Heart right ventricle (tissue), 16 donors: ENCODE measurements at regions of chr20 and their contacts with region 1.

Region 1: GRCh38 chr20:38825901-38826625 is 20.6 kb downstream of the PPP1R16B start:
- DNase-seq: no peak
- ATAC-seq: peak in 1 of 8 donors; percentile 15
- H3K4me3 ChIP-seq: no peak overlapping the region
- H3K27ac ChIP-seq: peak overlapping the region in 1 of 10 donors; percentile 39
- H3K4me1 ChIP-seq: peaks cover 6 to 86% (median 45%) of the 10 kb centered on the region in 9 donors
- H3K27me3 ChIP-seq: peaks cover 0 to 16% (median 0%) of the 10 kb centered on the region in 7 donors
- CTCF ChIP-seq: no peak

Region 2: GRCh38 chr20:38883081-38883980 is 57.3 kb after region 1 on chr20:
- intact Hi-C with region 1: loop called in 1 of 10 experiments (anchors 5 kb)
- DNase-seq: peak; percentile 28 to 30
- ATAC-seq: peak; percentile 26 to 61 (median 40)
- H3K4me3 ChIP-seq: no peak overlapping the region
- H3K27ac ChIP-seq: peak overlapping the region in 1 of 10 donors; percentile 21
- H3K4me1 ChIP-seq: peaks cover 0 to 55% (median 15%) of the 10 kb centered on the region in 9 donors
- H3K27me3 ChIP-seq: peaks cover 0 to 29% (median 11%) of the 10 kb centered on the region in 7 donors
- CTCF ChIP-seq: no peak

Region 3: GRCh38 chr20:39214828-39215227 is 388.8 kb after region 1 on chr20:
- intact Hi-C with region 1: no loop called
- DNase-seq: no peak
- ATAC-seq: no peak
- H3K4me3 ChIP-seq: no peak overlapping the region
- H3K27ac ChIP-seq: no peak overlapping the region
- H3K4me1 ChIP-seq: no peaks in the 10 kb centered on the region
- H3K27me3 ChIP-seq: peaks cover 0 to 5% (median 0%) of the 10 kb centered on the region in 7 donors
- CTCF ChIP-seq: no peak